ENCODE measurements at regions of chr2 and their contacts with region 1.

Region 1: DNA sequence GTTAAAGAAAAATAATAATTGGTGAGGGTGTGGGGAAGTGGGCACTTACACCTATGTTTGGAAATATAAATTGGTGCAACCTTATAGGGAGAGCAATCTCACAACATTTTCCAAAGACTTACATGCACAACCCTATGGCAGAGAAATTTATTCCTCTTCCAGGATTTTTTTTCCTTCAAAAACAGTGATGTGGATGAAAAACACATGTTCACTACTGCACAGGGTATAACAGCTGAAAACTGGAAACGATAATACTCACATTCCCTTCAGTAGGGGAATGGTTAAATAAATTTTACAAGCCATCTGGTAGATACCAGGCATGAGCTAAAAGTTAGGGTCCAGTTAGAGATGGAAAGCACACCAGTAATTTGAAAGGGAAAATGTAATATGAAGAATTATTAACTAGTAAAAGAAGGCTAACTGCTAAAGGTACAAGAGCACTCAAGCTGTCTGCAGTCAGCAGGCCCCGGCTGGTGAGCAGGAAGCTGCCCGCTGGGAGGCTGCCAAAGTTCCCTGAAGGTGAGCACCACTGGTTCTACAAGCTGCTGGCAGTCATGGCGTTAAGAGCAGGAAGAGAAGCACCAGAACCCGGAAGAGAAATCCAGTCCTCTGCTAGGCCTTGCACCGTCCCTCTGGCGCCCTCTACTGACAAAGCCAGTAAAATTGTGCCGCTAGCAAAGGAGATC is 28.4 kb upstream of the CASP8 start:
- DNase-seq: peak; percentile 69
- ATAC-seq: peak; percentile 62
- H3K4me3 Mint-ChIP-seq: peak overlapping the region; percentile 55
- H3K27ac Mint-ChIP-seq: peak overlapping the region; percentile 93
- H3K4me1 Mint-ChIP-seq: peaks cover 56% of the 10 kb centered on the region
- H3K27me3 Mint-ChIP-seq: no peaks in the 10 kb centered on the region
- CTCF ChIP-seq: peak; percentile 32

Region 2: GRCh38 chr2:200533754-200534153 is 698.2 kb before region 1 on chr2:
- CTCF ChIA-PET with region 1: no interaction called
- POLR2A ChIA-PET with region 1: no interaction called
- intact Hi-C with region 1: no loop called
- DNase-seq: no peak
- ATAC-seq: no peak
- H3K4me3 Mint-ChIP-seq: no peak overlapping the region
- H3K27ac Mint-ChIP-seq: no peak overlapping the region
- H3K4me1 Mint-ChIP-seq: no peaks in the 10 kb centered on the region
- H3K27me3 Mint-ChIP-seq: no peaks in the 10 kb centered on the region
- CTCF ChIP-seq: no peak

Region 3: DNA sequence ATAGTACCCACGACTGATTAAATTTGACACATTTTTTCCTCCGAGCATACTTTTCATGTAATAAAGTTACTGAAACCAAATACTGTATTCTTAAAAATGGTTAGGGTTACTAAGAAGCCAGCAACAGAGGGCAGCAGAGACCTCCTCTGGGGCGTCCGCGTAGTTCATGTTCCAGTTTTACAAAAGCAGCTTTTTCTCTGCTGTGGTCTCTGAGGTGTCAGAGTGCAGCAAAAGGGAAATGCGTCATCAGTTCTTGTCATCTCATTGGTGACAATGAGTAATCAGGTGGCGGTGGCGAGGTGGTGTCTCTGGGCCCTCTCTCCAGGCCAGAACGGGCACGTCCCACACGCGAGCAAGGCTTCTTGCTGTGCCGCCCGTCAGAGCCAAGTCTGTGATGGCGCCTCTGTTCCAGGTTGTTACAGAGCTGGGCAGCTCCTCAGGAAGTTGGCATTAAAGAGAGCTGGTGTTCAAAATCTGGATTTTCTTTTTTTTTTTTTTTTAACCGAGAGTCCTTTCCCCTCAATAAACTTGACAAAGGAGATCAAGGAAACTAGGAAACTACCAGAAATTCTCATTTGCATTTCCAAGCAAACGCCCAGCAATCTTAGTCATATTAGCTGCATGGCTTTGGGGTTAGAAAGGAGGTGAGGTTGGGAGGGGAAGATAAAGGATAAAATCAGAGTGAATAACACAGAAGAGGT is 518.8 kb before region 1 on chr2:
- CTCF ChIA-PET with region 1: interaction called, 8 read pairs
- POLR2A ChIA-PET with region 1: interaction called, 3 read pairs
- intact Hi-C with region 1: loop called (anchors 1 kb)
- DNase-seq: peak; percentile 68
- ATAC-seq: peak; percentile 99
- H3K4me3 Mint-ChIP-seq: peak overlapping the region; percentile 76
- H3K27ac Mint-ChIP-seq: peak overlapping the region; percentile 95
- H3K4me1 Mint-ChIP-seq: peaks cover 16% of the 10 kb centered on the region
- H3K27me3 Mint-ChIP-seq: peaks cover 2% of the 10 kb centered on the region
- CTCF ChIP-seq: no peak

Region 4: DNA sequence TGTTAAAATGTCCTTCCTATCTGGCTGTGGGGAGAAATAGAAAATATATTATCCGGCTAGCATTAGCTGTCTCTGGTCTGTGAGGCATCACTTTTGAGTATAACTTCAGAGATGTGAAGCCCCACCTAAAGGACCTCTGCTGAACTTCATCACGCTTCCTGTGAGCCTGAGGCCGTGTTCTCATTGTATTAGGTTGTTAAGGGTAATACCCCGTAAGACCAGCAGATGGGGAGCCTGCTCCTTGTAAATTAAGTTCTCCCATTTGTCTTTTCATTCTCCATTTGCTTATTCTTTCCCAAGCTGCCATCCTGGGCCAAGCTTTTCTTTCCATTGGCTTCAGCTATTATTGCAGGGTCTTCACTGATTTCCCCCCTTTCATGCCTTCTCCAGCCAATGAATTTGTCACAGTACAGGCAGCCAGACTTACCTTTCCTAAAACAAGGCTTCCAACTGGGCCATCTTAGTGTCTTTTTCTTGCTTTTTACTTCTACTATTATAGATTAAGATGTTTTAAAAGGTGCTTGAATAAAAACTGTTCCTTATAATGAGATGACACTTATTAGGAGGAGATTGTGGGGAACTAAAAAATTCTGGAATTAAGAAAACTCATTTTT is 330.4 kb before region 1 on chr2:
- CTCF ChIA-PET with region 1: interaction called, 41 read pairs
- POLR2A ChIA-PET with region 1: interaction called, 6 read pairs
- intact Hi-C with region 1: loop called (anchors 1 kb)
- DNase-seq: no peak
- ATAC-seq: peak; percentile 100
- H3K4me3 Mint-ChIP-seq: no peak overlapping the region
- H3K27ac Mint-ChIP-seq: peak overlapping the region; percentile 38
- H3K4me1 Mint-ChIP-seq: peaks cover 4% of the 10 kb centered on the region
- H3K27me3 Mint-ChIP-seq: no peaks in the 10 kb centered on the region
- CTCF ChIP-seq: peak; percentile 30

Region 5: DNA sequence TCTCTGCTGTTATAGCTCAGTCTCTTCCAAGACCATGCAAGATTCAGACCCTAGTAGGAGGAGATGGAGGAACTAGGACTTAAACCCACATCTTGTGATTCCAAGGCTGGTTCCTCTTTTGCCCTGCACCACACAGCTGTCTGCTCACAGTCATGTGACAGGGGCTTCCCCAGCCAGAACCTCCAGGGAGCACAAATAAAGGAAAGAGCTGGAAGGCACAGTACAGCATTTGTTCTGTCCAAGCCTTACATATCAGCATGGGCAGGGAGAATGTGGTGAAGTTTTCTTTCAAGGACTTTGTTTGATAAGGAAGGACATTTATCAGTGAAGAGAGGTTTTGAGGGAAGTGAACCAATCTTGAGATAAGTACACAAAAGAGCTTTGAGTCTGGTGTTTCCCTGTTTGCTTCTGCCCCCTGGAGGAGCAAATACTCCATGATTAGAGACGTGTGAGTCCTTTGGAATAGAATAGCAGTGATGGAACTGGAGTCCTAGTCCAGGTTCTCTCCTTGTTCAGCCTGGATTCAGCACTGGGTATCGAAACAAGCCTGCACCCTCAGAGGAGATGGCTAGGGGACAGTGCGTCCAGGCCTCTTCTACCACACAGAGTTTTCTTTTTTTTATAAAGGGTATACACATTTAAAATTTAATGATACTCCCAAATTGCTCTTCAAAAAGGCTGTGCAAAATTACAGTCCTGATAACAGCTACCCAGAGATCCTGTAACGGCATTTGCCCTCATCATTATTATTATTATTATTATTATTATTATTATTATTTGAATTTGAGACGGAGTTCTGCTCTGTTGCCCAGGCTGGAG is 73.6 kb before region 1 on chr2:
- CTCF ChIA-PET with region 1: interaction called, 13 read pairs
- POLR2A ChIA-PET with region 1: interaction called, 5 read pairs
- intact Hi-C with region 1: loop called (anchors 1 kb)
- DNase-seq: peak; percentile 71
- ATAC-seq: peak; percentile 87
- H3K4me3 Mint-ChIP-seq: peak overlapping the region; percentile 73
- H3K27ac Mint-ChIP-seq: peak overlapping the region; percentile 95
- H3K4me1 Mint-ChIP-seq: peaks cover 56% of the 10 kb centered on the region
- H3K27me3 Mint-ChIP-seq: no peaks in the 10 kb centered on the region
- CTCF ChIP-seq: no peak

Region 6: GRCh38 chr2:201220102-201220570 is 11.8 kb before region 1 on chr2:
- CTCF ChIA-PET with region 1: interaction called, 18 read pairs
- POLR2A ChIA-PET with region 1: interaction called, 12 read pairs
- intact Hi-C with region 1: no loop called
- DNase-seq: no peak
- ATAC-seq: peak; percentile 42
- H3K4me3 Mint-ChIP-seq: no peak overlapping the region
- H3K27ac Mint-ChIP-seq: peak overlapping the region; percentile 47
- H3K4me1 Mint-ChIP-seq: peaks cover 20% of the 10 kb centered on the region
- H3K27me3 Mint-ChIP-seq: no peaks in the 10 kb centered on the region
- CTCF ChIP-seq: no peak

Region 7: GRCh38 chr2:201451292-201452057 is 219.6 kb after region 1 on chr2 and contains the starts of genes STRADB and TRAK2:
- CTCF ChIA-PET with region 1: interaction called, 3 read pairs
- POLR2A ChIA-PET with region 1: interaction called, 17 read pairs
- intact Hi-C with region 1: loop called (anchors 1 kb)
- DNase-seq: peak; percentile 89
- ATAC-seq: peak; percentile 93
- H3K4me3 Mint-ChIP-seq: peak within 1 kb of the TSS; percentile 97
- H3K27ac Mint-ChIP-seq: peak within 1 kb of the TSS; percentile 95
- H3K4me1 Mint-ChIP-seq: peaks cover 51% of the 10 kb centered on the region
- H3K27me3 Mint-ChIP-seq: no peaks in the 10 kb centered on the region
- CTCF ChIP-seq: no peak
- total RNA-seq, gene STRADB: 17.8 and 23.3 TPM in 2 replicates
- total RNA-seq, gene TRAK2: 17.7 and 20.1 TPM in 2 replicates

Region 8: DNA sequence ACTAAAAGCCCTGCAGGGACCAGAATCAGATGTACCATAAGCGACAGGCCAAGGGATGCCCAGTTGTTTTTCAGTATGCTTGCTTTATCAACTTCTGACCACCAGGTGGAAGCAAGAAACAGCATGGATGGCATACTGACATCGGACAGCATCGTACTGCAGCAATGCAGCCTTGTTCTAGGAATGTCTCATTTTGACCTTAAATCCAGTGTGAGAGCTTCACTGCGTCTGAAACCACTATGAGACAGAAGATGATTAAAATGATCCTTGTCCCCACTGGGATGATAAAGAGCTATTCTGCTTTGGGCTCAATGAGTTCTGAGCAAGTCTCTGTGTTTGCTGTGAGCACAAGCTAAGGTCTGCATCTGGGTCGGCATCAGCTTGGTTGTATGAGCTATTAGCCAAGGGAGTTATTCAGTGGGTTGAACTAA is 628.7 kb after region 1 on chr2:
- CTCF ChIA-PET with region 1: no interaction called
- POLR2A ChIA-PET with region 1: no interaction called
- intact Hi-C with region 1: loop called (anchors 2 kb)
- DNase-seq: no peak
- ATAC-seq: peak; percentile 65
- H3K4me3 Mint-ChIP-seq: no peak overlapping the region
- H3K27ac Mint-ChIP-seq: no peak overlapping the region
- H3K4me1 Mint-ChIP-seq: peaks cover 8% of the 10 kb centered on the region
- H3K27me3 Mint-ChIP-seq: peaks cover 50% of the 10 kb centered on the region
- CTCF ChIP-seq: peak; percentile 42

Measured in activated B cell treated with CpG ODN at 0.5 μM for 24 hours (primary cell).